HEK293 (cell line): ENCODE measurements at regions of chr18 and their contacts with region 1.

Region 1: DNA sequence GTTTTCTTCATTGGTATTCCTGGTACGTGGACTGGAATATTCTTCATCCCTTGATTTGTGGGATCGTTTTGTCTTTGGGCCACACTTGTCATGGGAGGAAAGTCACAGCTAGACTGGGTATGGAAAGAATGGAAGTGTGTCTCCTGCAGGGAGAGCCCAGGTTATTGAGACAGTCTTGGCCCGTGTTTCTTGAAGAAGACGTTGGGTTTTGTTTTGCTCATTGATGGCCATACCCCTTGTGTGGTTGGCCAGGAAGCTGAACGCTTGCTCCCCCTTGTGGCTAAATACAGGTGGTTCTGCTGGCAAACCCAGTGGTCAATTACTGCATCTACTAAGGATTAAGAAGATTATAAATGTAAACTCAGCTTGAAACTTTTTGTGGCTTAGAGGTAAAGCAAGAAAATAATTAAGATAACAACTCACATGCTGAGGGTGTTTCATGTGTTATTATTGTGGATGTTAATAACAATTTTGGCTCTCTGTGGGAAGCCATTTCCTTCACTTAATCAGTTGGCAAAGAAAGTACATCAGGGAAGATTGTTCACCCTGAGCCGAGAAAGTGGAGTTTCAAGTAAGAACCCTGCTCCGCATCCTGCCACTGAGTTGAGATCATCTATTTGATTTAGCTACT is 91.8 kb downstream of the NEDD4L start:
- H3K4me3 ChIP-seq: no peak overlapping the region
- H3K27ac ChIP-seq: no peak overlapping the region; the same call in 1 of the 2 replicates
- H3K4me1 ChIP-seq: peaks cover 11% of the 10 kb centered on the region
- CTCF ChIP-seq: peak; percentile 70

Region 2: GRCh38 chr18:57846258-57846657 is 289.6 kb before region 1 on chr18:
- CTCF ChIA-PET with region 1: no interaction called
- POLR2A ChIA-PET with region 1: no interaction called
- H3K4me3 ChIP-seq: no peak overlapping the region
- H3K27ac ChIP-seq: 0 out of 2 replicates have a peak overlapping the region, but pooled peaks have one; percentile 49
- H3K4me1 ChIP-seq: peaks cover 8% of the 10 kb centered on the region
- CTCF ChIP-seq: no peak

Region 3: DNA sequence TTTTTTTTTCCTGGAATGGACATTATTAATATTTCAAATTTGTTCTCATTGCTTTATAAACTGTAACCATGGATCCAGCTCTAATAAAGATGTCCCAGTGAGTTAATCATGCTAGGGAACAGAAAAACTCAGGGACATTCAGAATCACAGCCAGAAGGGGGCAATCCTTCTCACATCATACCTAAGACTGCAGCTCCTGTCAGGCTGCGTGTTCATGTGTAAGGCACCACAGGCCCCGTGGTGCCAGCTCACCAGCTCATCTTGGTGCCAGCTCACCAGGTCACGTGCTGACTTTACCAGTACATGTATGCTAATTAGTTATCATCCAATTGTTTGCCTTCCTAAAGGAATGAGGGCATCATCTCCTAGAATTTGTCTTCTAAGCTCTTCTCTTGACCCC is 176.5 kb before region 1 on chr18:
- CTCF ChIA-PET with region 1: interaction called, 20 read pairs
- POLR2A ChIA-PET with region 1: no interaction called
- H3K4me3 ChIP-seq: no peak overlapping the region
- H3K27ac ChIP-seq: no peak overlapping the region
- H3K4me1 ChIP-seq: peaks cover 8% of the 10 kb centered on the region; the same call in 1 of the 2 replicates
- CTCF ChIP-seq: no peak

Region 4: GRCh38 chr18:58051765-58052460 is 83.9 kb before region 1 on chr18:
- CTCF ChIA-PET with region 1: interaction called, 14 read pairs
- POLR2A ChIA-PET with region 1: no interaction called
- H3K4me3 ChIP-seq: no peak overlapping the region
- H3K27ac ChIP-seq: no peak overlapping the region
- H3K4me1 ChIP-seq: peaks cover 2% of the 10 kb centered on the region; the same call in 1 of the 2 replicates
- CTCF ChIP-seq: peak; percentile 28; the same call in 1 of the 2 replicates

Region 5: DNA sequence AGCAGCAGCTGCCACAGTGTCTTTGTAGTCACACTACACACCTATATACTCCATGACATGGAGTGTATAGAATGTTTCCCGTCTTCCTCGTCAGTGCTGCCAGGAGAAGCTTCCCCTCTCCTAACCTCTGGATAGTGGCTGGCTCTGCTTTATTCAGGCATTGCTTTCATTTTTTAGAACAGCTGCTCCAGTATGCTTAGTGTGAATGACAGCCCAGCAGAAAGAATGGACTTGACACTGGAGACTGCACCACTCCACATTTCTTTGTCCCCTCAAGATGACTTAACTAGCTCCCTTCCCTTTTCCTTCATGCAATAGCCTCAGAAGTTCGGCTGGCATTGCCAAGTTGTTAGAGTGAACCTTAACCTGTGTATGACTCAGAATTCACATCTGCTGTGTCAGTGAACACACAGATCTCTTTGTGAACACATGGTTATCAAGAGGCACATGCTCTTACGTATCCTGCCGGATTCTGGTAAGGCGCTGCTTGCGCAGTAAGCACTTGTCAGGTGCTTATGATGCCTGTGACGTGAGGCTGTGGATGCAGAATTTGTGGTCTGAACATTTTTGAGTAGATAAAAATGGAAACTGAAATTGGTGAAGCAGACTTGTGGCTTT is 17.9 kb before region 1 on chr18:
- CTCF ChIA-PET with region 1: interaction called, 68 read pairs
- POLR2A ChIA-PET with region 1: no interaction called
- H3K4me3 ChIP-seq: no peak overlapping the region
- H3K27ac ChIP-seq: no peak overlapping the region
- H3K4me1 ChIP-seq: 0 out of 2 replicates have a peak, but pooled peaks cover 2% of the 10 kb centered on the region
- CTCF ChIP-seq: no peak

Region 6: GRCh38 chr18:58180738-58181353 is 45.0 kb after region 1 on chr18:
- CTCF ChIA-PET with region 1: interaction called, 13 read pairs
- POLR2A ChIA-PET with region 1: no interaction called
- H3K4me3 ChIP-seq: no peak overlapping the region
- H3K27ac ChIP-seq: no peak overlapping the region
- H3K4me1 ChIP-seq: peaks cover 5% of the 10 kb centered on the region; the same call in 1 of the 2 replicates
- CTCF ChIP-seq: peak; percentile 62

Region 7: DNA sequence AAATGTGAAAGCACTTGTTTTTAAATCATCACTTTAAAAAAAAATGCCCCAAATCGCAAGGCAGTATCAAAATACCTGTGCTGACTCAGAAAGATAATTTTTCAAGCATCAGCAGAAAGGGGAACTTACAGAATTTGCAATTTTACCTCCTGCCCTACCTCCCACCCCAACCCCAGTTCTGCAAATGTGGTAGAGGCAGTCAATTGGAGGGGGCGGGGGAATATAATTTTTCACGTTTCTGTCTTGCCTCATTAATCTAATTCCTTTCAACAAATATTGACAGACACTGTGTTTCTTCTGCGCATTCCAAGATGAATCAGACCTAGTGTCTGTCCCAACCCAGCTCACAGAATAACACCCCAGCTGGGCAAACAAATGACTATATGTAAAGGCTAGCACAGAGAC is 416.2 kb after region 1 on chr18:
- CTCF ChIA-PET with region 1: no interaction called
- POLR2A ChIA-PET with region 1: no interaction called
- H3K4me3 ChIP-seq: no peak overlapping the region
- H3K27ac ChIP-seq: no peak overlapping the region
- H3K4me1 ChIP-seq: no peaks in the 10 kb centered on the region; the same call in 1 of the 2 replicates
- CTCF ChIP-seq: no peak